Activated CD4-positive, alpha-beta T cell treated with anti-CD3 and anti-CD28 coated beads for 36 hours (primary cell): ENCODE measurements at regions of chr3 and their contacts with region 1.

Region 1: DNA sequence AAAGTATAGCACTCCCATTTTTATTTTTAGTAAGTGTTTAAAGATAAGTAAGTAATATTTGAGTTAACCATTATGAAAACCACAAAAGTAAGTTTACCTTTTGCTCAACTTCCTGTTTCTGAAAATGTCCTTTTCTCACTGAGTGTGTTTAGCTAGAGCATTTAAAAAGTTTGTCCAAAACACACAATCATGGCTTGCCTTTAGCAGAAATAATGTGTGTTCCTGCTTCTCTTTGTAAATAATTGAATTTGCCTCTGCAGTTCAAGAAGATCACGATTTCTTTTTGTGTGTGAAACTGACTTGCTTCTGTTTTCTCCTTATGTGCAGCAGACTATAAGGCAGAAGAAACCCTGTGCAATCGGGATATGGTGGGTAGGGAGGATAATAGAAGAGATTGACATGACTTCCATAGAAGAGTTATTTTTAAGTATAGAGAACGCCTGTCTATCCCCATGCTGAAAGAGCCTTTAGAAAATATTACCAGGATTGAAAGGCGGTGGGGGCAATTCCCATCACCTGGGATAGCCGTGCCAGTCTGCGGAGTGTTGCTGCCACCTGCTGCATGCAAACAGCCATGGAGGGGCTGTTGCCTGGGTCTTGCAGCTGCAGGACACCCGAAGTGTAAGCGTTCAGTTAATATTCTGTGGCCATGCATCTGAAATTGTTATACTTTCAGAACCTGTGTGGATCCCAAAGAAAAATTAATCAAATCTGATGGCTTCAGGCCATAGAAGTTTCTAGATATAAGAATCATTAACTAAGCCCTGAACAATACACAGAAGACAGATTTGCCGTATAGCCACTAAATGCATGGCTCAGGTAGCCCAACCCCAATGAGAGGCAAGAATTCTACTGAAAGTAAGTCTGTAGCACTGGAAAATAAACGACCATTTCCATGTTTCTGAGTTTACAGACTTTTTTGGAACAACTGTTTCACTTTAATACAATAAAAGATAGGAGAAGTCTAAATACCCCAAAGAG is 2.4 kb upstream of the CD96 start:
- DNase-seq: peak; percentile 81
- ATAC-seq: peak; percentile 21
- H3K4me3 Mint-ChIP-seq: peak overlapping the region; percentile 62
- H3K27ac Mint-ChIP-seq: peak overlapping the region; percentile 80
- H3K4me1 Mint-ChIP-seq: peaks cover 72% of the 10 kb centered on the region
- H3K27me3 Mint-ChIP-seq: no peaks in the 10 kb centered on the region

Region 2: GRCh38 chr3:110070161-110070916 is 1469.3 kb before region 1 on chr3:
- CTCF ChIA-PET with region 1: no interaction called
- POLR2A ChIA-PET with region 1: no interaction called
- intact Hi-C with region 1: loop called in 1 of 2 experiments (anchors 10 kb)
- DNase-seq: no peak
- ATAC-seq: peak; percentile 71
- H3K4me3 Mint-ChIP-seq: no peak overlapping the region
- H3K27ac Mint-ChIP-seq: no peak overlapping the region
- H3K4me1 Mint-ChIP-seq: peaks cover 18% of the 10 kb centered on the region
- H3K27me3 Mint-ChIP-seq: no peaks in the 10 kb centered on the region

Region 3: DNA sequence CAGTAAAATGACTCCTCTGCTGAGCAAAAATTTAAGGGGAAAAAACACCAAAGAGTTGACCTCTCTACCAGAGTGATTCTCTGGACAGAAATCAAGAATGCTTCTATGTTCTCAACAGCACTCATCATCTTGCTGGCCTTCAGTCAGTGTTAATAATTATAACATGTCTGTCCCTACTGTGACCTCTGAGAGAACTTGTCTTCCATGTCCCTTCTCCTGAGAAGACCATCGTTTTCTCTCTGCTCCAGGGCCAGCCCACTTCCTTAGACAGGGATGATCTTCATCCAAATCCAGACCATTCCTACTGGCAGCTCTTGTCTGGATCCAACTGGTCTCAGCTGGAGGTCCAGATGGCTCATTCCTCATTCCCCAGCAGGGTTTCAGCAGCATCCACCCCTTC is 607.1 kb before region 1 on chr3:
- CTCF ChIA-PET with region 1: no interaction called
- POLR2A ChIA-PET with region 1: no interaction called
- intact Hi-C with region 1: no loop called
- DNase-seq: no peak
- ATAC-seq: no peak
- H3K4me3 Mint-ChIP-seq: no peak overlapping the region
- H3K27ac Mint-ChIP-seq: no peak overlapping the region
- H3K4me1 Mint-ChIP-seq: no peaks in the 10 kb centered on the region
- H3K27me3 Mint-ChIP-seq: peaks cover 5% of the 10 kb centered on the region

Region 4: DNA sequence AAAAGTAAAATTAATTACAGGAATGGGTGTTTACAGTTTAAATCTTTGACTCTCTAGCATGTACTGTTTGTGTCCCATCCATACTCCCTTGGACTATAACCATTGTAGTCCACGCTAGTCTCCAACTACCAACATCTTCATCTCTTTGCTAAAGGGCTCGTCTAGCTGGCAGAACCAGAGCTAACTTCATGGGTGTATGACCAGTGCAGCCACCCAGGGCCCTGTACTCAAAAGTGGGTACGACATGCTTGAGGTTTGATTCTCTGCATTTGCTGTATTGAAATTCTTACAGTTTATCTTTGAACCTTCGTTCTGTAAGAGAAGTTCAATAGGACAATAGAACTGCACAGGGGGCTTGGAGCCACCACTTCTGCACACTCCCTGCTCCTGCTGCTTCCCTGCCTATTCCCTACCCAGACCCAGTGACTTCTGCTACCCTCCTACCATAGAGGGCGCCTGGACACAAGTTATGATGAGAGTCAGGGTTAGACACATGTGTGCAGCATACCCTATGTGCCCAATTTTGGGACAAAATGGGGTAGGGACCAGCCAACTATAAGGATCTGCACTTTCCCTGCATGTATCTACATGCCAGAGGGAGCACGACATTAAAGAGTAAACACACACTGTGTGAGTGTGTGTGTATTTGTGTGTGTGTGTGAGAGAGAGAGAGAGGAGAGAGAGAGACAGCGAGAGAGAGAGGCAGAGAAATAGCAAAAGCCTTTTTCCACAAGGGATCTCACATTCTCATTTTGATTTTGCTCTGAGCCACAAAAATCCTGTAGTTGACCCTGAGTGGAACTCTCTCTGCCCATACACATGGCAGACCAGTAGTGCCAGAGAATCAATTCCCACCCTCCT is 527.0 kb before region 1 on chr3:
- CTCF ChIA-PET with region 1: interaction called, 3 read pairs
- POLR2A ChIA-PET with region 1: no interaction called
- intact Hi-C with region 1: loop called in 1 of 2 experiments (anchors 10 kb)
- DNase-seq: peak; percentile 25
- ATAC-seq: no peak
- H3K4me3 Mint-ChIP-seq: no peak overlapping the region
- H3K27ac Mint-ChIP-seq: no peak overlapping the region
- H3K4me1 Mint-ChIP-seq: no peaks in the 10 kb centered on the region
- H3K27me3 Mint-ChIP-seq: peaks cover 2% of the 10 kb centered on the region

Region 5: GRCh38 chr3:111210003-111210711 is 329.5 kb before region 1 on chr3:
- CTCF ChIA-PET with region 1: no interaction called
- POLR2A ChIA-PET with region 1: no interaction called
- intact Hi-C with region 1: no loop called
- DNase-seq: no peak
- ATAC-seq: no peak
- H3K4me3 Mint-ChIP-seq: no peak overlapping the region
- H3K27ac Mint-ChIP-seq: no peak overlapping the region
- H3K4me1 Mint-ChIP-seq: no peaks in the 10 kb centered on the region
- H3K27me3 Mint-ChIP-seq: no peaks in the 10 kb centered on the region

Region 6: GRCh38 chr3:111338059-111338698 is 201.5 kb before region 1 on chr3:
- CTCF ChIA-PET with region 1: no interaction called
- POLR2A ChIA-PET with region 1: no interaction called
- intact Hi-C with region 1: loop called (anchors 2 to 10 kb)
- DNase-seq: peak; percentile 63
- ATAC-seq: no peak
- H3K4me3 Mint-ChIP-seq: no peak overlapping the region
- H3K27ac Mint-ChIP-seq: no peak overlapping the region
- H3K4me1 Mint-ChIP-seq: peaks cover 13% of the 10 kb centered on the region
- H3K27me3 Mint-ChIP-seq: no peaks in the 10 kb centered on the region

Region 7: GRCh38 chr3:111594205-111594604 is 54.6 kb after region 1 on chr3:
- CTCF ChIA-PET with region 1: no interaction called
- POLR2A ChIA-PET with region 1: interaction called, 5 read pairs
- intact Hi-C with region 1: loop called (anchors 1 to 2 kb)
- DNase-seq: no peak
- ATAC-seq: no peak
- H3K4me3 Mint-ChIP-seq: peak overlapping the region; percentile 93
- H3K27ac Mint-ChIP-seq: peak overlapping the region; percentile 98
- H3K4me1 Mint-ChIP-seq: peaks cover 59% of the 10 kb centered on the region
- H3K27me3 Mint-ChIP-seq: no peaks in the 10 kb centered on the region

Region 8: GRCh38 chr3:111616417-111617105 is 76.9 kb after region 1 on chr3:
- CTCF ChIA-PET with region 1: interaction called, 8 read pairs
- POLR2A ChIA-PET with region 1: interaction called, 7 read pairs
- intact Hi-C with region 1: loop called (anchors 1 kb)
- DNase-seq: peak; percentile 84
- ATAC-seq: peak; percentile 84
- H3K4me3 Mint-ChIP-seq: no peak overlapping the region
- H3K27ac Mint-ChIP-seq: peak overlapping the region; percentile 92
- H3K4me1 Mint-ChIP-seq: peaks cover 77% of the 10 kb centered on the region
- H3K27me3 Mint-ChIP-seq: no peaks in the 10 kb centered on the region